Stomach (tissue), 19 donors: ENCODE measurements at regions of chr9 and their contacts with region 1.

Region 1: GRCh38 chr9:116337015-116337414 is 183.4 kb downstream of the PAPPA start:
- DNase-seq: no peak
- H3K4me3 ChIP-seq: no peak overlapping the region
- H3K27ac ChIP-seq: no peak overlapping the region
- H3K4me1 ChIP-seq: no peaks in the 10 kb centered on the region
- H3K27me3 ChIP-seq: peaks cover 0 to 6% (median 0%) of the 10 kb centered on the region in 3 donors
- CTCF ChIP-seq: no peak
- EP300 ChIP-seq: no peak
- POLR2A ChIP-seq: no peak

Region 2: DNA sequence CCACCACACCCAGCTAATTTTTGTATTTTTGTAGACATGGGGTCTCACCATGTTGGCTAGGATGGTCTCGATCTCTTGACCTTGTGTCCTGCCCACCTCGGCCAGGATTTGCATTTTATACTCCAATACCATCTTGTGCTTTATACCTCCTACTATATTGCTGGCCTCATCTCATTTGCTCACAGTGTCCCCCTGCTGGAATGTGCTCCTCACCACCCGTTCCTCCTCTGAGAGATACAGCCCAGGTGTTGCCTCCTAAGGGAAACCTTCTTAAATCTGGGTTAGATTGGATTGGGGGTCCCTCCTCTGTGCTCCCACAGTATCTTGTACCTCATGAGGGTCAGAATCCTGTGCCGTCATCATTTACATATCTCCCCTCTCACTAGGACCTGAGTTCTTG is 51.7 kb before region 1 on chr9:
- intact Hi-C with region 1: no loop called
- DNase-seq: no peak
- H3K4me3 ChIP-seq: no peak overlapping the region
- H3K27ac ChIP-seq: no peak overlapping the region
- H3K4me1 ChIP-seq: no peaks in the 10 kb centered on the region
- H3K27me3 ChIP-seq: no peaks in the 10 kb centered on the region
- CTCF ChIP-seq: no peak
- EP300 ChIP-seq: no peak
- POLR2A ChIP-seq: no peak

Region 3: DNA sequence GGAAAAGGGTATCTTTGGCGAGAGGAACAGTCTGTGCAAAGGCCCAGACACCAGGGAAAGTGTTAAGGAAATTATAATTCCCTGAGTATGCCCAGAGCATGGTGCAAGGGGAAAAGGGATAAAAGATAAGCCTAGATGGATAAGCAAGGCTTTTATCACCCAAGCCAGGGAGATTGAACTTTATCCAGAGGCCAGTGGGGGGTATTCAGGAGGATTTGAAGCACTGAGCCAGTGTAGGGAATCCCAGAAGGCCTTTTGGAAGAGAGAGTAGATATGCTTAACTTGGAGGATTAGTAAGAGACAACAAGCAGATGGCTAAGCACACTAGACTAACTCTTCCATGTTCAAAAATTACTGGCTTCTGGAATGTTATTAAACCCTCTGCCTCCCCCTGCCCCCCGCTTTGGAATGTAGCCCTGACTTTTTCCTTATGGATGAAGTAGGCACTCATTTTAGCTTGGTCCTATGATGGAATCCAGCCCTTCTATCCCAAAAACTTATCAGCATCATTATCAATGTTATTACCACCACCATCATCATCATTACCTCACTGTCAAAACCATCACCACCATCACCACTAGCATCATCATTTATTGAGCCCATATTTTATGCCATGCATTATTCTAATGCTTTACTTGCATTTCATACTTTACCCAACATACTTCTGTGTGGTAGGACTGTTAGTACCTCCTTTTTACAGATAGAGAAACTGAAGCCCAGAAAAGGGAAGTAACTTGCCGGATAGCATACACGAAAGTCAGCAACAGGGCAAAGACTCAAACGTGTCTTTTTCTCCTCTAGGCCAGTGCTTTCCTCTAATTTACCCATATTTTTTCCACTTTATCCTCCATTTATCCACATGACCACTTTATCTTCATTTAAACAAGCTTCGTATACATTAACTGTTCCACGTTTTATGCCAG is 53.6 kb after region 1 on chr9:
- intact Hi-C with region 1: loop called (anchors 10 kb)
- DNase-seq: no peak
- H3K4me3 ChIP-seq: no peak overlapping the region
- H3K27ac ChIP-seq: no peak overlapping the region
- H3K4me1 ChIP-seq: no peaks in the 10 kb centered on the region
- H3K27me3 ChIP-seq: no peaks in the 10 kb centered on the region
- CTCF ChIP-seq: no peak
- EP300 ChIP-seq: no peak
- POLR2A ChIP-seq: no peak